ENCODE measurements at regions of chr17 and their contacts with region 1.

Region 1: GRCh38 chr17:29760761-29761696 is 138.3 kb upstream of the CORO6 start:
- DNase-seq: peak; percentile 91 to 94 (median 92)
- H3K4me3 ChIP-seq: peak overlapping the region; percentile 37 to 67
- H3K4me3 Mint-ChIP-seq: peak overlapping the region; percentile 92 to 98 (median 94)
- H3K27ac ChIP-seq: peak overlapping the region; percentile 69
- H3K27ac Mint-ChIP-seq: peak overlapping the region; percentile 92 to 98 (median 95)
- H3K4me1 ChIP-seq: peaks cover 41% of the 10 kb centered on the region
- H3K4me1 Mint-ChIP-seq: peaks cover 19 to 57% (median 35%) of the 10 kb centered on the region in 4 donors
- H3K27me3 ChIP-seq: no peaks in the 10 kb centered on the region
- H3K27me3 Mint-ChIP-seq: no peaks in the 10 kb centered on the region

Region 2: GRCh38 chr17:29293890-29294579 is 467.0 kb before region 1 on chr17 and contains the start of gene NUFIP2:
- CTCF ChIA-PET with region 1: no interaction called
- POLR2A ChIA-PET with region 1: interaction called, 3 read pairs
- intact Hi-C with region 1: loop called (anchors 5 kb)
- DNase-seq: peak; percentile 95 to 99 (median 98)
- H3K4me3 ChIP-seq: peak within 1 kb of the TSS; percentile 77 to 79
- H3K4me3 Mint-ChIP-seq: peak within 1 kb of the TSS; percentile 99 to 100 (median 100)
- H3K27ac ChIP-seq: peak within 1 kb of the TSS; percentile 77
- H3K27ac Mint-ChIP-seq: peak within 1 kb of the TSS; percentile 98 to 100 (median 99)
- H3K4me1 ChIP-seq: peaks cover 41% of the 10 kb centered on the region
- H3K4me1 Mint-ChIP-seq: peaks cover 20 to 51% (median 34%) of the 10 kb centered on the region in 4 donors
- H3K27me3 ChIP-seq: no peaks in the 10 kb centered on the region
- H3K27me3 Mint-ChIP-seq: no peaks in the 10 kb centered on the region
- total RNA-seq, gene NUFIP2: 77.5 to 85.1 TPM

Region 3: DNA sequence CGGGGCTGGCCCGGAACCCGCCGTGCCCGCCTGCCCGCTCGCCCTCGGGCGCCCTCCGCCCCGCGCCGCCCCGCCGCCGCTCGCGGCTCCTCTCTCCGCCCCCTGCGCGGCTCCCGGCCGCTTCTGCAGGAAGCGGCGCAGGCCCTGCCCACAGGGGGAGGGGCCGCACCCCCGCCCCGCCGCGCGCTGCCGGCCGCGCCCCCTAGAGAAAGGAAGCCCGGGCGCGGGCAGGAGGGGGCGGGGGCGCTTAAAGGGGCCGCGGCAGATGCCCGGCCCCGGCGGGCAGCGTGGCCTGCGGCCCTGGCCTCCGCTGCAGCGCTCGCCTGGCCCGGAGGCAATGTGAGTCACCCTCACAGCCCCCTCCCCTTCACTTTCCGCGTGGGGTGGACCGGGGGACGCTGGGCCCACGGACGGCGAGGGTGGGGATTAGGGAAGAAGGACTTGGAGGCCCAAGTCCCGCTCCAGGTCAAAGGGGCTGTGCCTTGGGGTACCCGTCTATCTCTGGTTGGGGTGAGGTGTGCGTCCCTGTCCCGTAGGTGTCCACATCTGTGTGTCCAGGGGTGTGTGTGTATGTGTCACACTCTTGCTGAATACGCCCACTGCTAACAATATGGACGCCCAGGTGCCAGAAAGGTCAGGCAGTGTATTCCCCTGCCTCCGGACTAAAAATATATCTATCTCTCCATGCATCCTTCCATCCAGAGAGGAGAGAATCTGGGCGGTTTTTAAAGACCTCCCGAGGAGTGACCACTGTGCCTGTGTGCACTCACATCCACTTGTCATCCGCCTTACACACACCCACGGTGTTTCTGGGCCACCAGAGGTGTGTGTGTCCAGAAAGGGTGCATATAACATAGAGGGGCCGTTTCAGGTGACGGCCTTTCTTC is 171.3 kb before region 1 on chr17 and contains the start of gene GIT1:
- CTCF ChIA-PET with region 1: interaction called, 3 read pairs
- POLR2A ChIA-PET with region 1: interaction called, 12 read pairs
- intact Hi-C with region 1: loop called (anchors 5 kb)
- DNase-seq: peak; percentile 81 to 86 (median 85)
- H3K4me3 ChIP-seq: peak within 1 kb of the TSS; percentile 61 to 82
- H3K4me3 Mint-ChIP-seq: peak within 1 kb of the TSS; percentile 93 to 97 (median 95)
- H3K27ac ChIP-seq: peak within 1 kb of the TSS; percentile 70
- H3K27ac Mint-ChIP-seq: peak within 1 kb of the TSS; percentile 86 to 97 (median 92)
- H3K4me1 ChIP-seq: peaks cover 82% of the 10 kb centered on the region
- H3K4me1 Mint-ChIP-seq: peaks cover 30 to 71% (median 53%) of the 10 kb centered on the region in 4 donors
- H3K27me3 ChIP-seq: no peaks in the 10 kb centered on the region
- H3K27me3 Mint-ChIP-seq: no peaks in the 10 kb centered on the region
- total RNA-seq, gene GIT1: 78.9 to 82.8 TPM

Region 4: GRCh38 chr17:29640413-29640812 is 120.6 kb before region 1 on chr17:
- CTCF ChIA-PET with region 1: interaction called, 6 read pairs
- POLR2A ChIA-PET with region 1: interaction called, 3 read pairs
- intact Hi-C with region 1: loop called (anchors 5 kb)
- DNase-seq: no peak
- H3K4me3 ChIP-seq: no peak overlapping the region
- H3K4me3 Mint-ChIP-seq: no peak overlapping the region
- H3K27ac ChIP-seq: no peak overlapping the region
- H3K27ac Mint-ChIP-seq: peak overlapping the region in 5 of 7 donors; percentile 60 to 96 (median 75)
- H3K4me1 ChIP-seq: no peaks in the 10 kb centered on the region
- H3K4me1 Mint-ChIP-seq: peaks cover 7 to 19% (median 13%) of the 10 kb centered on the region in 4 donors
- H3K27me3 ChIP-seq: no peaks in the 10 kb centered on the region
- H3K27me3 Mint-ChIP-seq: no peaks in the 10 kb centered on the region

Region 5: GRCh38 chr17:29699283-29699682 is 61.7 kb before region 1 on chr17:
- CTCF ChIA-PET with region 1: interaction called, 15 read pairs
- POLR2A ChIA-PET with region 1: interaction called, 82 read pairs
- intact Hi-C with region 1: no loop called
- DNase-seq: no peak
- H3K4me3 ChIP-seq: no peak overlapping the region
- H3K4me3 Mint-ChIP-seq: no peak overlapping the region
- H3K27ac ChIP-seq: no peak overlapping the region
- H3K27ac Mint-ChIP-seq: peak overlapping the region in 5 of 7 donors; percentile 47 to 80 (median 69)
- H3K4me1 ChIP-seq: peaks cover 7% of the 10 kb centered on the region
- H3K4me1 Mint-ChIP-seq: peaks cover 9 to 19% (median 14%) of the 10 kb centered on the region in 4 donors
- H3K27me3 ChIP-seq: no peaks in the 10 kb centered on the region
- H3K27me3 Mint-ChIP-seq: no peaks in the 10 kb centered on the region

Region 6: DNA sequence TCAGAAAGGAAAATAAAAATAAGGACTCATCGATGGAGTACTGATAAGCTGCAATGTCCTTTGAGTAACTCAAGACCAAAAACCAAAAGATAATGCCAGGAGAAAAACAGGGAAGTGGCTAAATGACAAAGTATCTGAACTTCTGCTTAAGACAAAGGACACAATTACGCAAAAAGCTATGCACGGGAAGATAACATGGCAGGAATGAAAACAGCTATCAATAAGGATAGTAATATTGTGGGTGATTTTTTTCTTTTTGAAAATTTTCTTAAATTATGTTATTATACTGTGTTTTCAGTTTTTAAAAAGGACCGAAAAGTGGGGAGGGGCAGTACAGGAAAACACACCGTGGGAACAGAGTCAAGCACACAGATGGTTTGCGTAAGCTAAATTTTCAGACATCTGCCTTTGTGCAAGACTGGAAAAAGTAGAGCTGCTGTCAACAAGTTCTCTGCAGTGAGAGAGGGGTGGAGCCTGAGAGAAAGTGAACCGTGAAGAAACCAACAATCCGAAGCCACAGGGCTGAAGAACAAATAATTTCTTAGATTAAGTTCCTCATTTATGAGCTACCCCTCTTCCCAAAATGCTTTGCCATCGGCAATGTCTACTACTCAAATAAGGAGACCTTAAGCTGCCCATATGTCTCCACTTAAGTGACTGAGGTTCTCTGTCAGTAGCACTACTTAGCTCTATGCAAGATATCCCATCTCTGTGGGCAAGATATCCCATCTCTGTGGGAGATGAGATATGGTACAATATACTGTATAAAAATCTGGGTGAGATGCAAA is 38.4 kb before region 1 on chr17:
- CTCF ChIA-PET with region 1: interaction called, 9 read pairs
- POLR2A ChIA-PET with region 1: interaction called, 55 read pairs
- intact Hi-C with region 1: loop called (anchors 1 kb)
- DNase-seq: peak; percentile 51 to 73 (median 57)
- H3K4me3 ChIP-seq: peak overlapping the region; percentile 1 to 6
- H3K4me3 Mint-ChIP-seq: peak overlapping the region; percentile 49 to 85 (median 74)
- H3K27ac ChIP-seq: peak overlapping the region; percentile 5
- H3K27ac Mint-ChIP-seq: peak overlapping the region; percentile 66 to 94 (median 81)
- H3K4me1 ChIP-seq: peaks cover 71% of the 10 kb centered on the region
- H3K4me1 Mint-ChIP-seq: peaks cover 58 to 82% (median 70%) of the 10 kb centered on the region in 4 donors
- H3K27me3 ChIP-seq: no peaks in the 10 kb centered on the region
- H3K27me3 Mint-ChIP-seq: no peaks in the 10 kb centered on the region

Region 7: DNA sequence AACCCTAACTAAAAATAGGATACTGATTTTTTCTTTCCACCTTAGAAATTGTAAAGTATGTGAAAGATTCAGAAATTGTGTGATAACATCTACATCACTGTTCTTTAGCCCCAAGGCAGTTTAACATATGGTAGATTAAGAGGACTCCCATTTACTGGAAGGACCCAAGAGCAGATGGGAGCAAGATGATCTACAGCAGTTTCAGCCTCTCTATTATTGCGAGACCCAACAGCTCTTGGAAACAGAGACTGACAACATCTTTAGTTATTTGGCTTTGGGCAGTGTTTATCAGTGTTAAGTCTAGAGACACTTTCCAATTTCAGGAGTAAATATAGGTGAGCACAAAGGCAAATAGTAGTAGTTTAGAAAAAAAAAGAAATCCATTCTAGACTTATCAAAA is 13.4 kb before region 1 on chr17:
- CTCF ChIA-PET with region 1: interaction called, 3 read pairs
- POLR2A ChIA-PET with region 1: interaction called, 24 read pairs
- intact Hi-C with region 1: no loop called
- DNase-seq: no peak
- H3K4me3 ChIP-seq: no peak overlapping the region
- H3K4me3 Mint-ChIP-seq: peak overlapping the region in 2 of 8 donors; percentile 8 to 29
- H3K27ac ChIP-seq: no peak overlapping the region
- H3K27ac Mint-ChIP-seq: peak overlapping the region in 5 of 7 donors; percentile 6 to 81 (median 57)
- H3K4me1 ChIP-seq: peaks cover 40% of the 10 kb centered on the region
- H3K4me1 Mint-ChIP-seq: peaks cover 41 to 83% (median 60%) of the 10 kb centered on the region in 4 donors
- H3K27me3 ChIP-seq: no peaks in the 10 kb centered on the region
- H3K27me3 Mint-ChIP-seq: no peaks in the 10 kb centered on the region